ENCODE measurements at regions of chr19 and their contacts with region 1.

Region 1: DNA sequence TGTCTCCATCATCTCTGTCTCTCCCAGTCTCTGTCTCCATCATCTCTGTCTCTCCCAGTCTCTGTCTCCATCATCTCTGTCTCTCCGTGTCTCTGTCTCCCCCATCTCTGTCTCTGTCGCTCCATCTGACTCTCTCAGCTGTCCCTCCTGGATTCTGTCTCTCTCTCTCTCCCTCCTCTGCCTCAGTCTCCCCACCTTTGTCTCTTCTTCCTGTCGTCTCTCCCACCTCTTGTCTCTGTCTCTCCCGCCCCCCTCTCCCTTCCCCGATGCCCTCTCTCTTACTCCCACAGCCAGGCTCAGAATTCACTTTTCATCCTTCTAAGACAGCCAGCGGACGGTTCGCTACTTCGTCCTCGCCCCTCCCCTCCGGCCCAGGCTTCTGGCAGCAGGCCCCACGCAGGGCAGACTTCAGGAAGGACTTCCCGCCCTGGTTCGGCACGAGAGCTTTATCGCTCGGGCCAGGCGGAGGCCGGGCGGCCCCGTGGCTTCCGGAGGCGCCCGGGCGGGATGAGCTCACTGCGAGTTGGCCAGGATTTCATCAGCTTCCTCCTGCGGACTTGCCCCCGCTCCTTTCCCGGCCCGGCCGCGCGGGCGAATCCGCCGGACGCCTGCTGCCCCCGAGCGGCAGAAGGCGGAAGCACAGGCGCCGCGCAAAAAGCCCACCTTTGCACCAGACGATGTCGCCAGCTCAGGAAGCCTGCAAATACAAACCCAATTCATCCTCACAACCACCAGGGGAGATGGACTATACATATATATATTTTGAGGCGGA is 12.4 kb upstream of the CCDC9 start:
- DNase-seq: peak; percentile 72 to 95 (median 86)
- ATAC-seq: peak; percentile 42
- H3K4me3 ChIP-seq: peak overlapping the region; percentile 35
- H3K4me3 Mint-ChIP-seq: peak overlapping the region; percentile 85
- H3K27ac ChIP-seq: peak overlapping the region; percentile 45 to 65
- H3K27ac Mint-ChIP-seq: no peak overlapping the region
- H3K4me1 ChIP-seq: peaks cover 62% of the 10 kb centered on the region
- H3K4me1 Mint-ChIP-seq: peaks cover 15% of the 10 kb centered on the region
- H3K27me3 ChIP-seq: no peaks in the 10 kb centered on the region
- H3K27me3 Mint-ChIP-seq: no peaks in the 10 kb centered on the region
- CTCF ChIP-seq: peak; percentile 98

Region 2: DNA sequence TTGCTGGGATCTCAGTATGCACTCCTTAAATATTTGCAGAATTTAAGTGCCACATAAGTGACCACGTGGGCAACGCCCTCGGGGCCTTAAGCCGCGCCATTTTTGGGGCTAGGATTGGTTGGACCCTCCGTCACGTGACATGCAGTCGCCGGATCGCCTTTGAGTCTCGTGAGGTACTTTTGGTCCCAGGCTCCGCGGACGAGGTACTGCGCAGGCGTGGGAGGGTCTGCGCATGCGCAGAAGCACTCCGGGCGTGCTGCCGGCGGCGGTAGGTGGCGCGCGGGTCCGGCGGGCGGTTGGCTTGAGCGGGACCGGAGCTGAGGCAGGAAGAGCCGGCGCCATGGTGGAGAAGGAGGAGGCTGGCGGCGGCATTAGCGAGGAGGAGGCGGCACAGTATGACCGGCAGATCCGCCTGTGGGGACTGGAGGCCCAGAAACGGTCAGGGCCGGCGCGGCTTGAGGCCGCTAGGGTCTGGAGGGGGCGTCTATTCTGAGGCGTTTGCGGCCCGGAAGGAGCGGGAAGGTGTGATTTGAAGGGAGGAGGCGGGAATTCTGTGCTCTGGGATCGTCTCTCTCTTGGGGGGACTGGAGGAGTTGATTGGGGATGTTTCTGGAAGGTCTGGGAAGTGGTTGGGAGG is 113.3 kb before region 1 on chr19 and contains the start of gene SAE1:
- CTCF ChIA-PET with region 1: interaction called, 23 read pairs
- POLR2A ChIA-PET with region 1: interaction called, 7 read pairs
- intact Hi-C with region 1: loop called in 1 of 2 experiments (anchors 5 kb)
- DNase-seq: peak; percentile 82 to 98 (median 92)
- ATAC-seq: peak; percentile 91
- H3K4me3 ChIP-seq: peak within 1 kb of the TSS; percentile 95
- H3K4me3 Mint-ChIP-seq: peak within 1 kb of the TSS; percentile 96
- H3K27ac ChIP-seq: peak within 1 kb of the TSS; percentile 68 to 74
- H3K27ac Mint-ChIP-seq: peak within 1 kb of the TSS; percentile 83
- H3K4me1 ChIP-seq: peaks cover 44% of the 10 kb centered on the region
- H3K4me1 Mint-ChIP-seq: peaks cover 52% of the 10 kb centered on the region
- H3K27me3 ChIP-seq: no peaks in the 10 kb centered on the region
- H3K27me3 Mint-ChIP-seq: no peaks in the 10 kb centered on the region
- CTCF ChIP-seq: peak; percentile 73
- total RNA-seq, gene SAE1: 29.6 to 30.9 TPM

Region 3: DNA sequence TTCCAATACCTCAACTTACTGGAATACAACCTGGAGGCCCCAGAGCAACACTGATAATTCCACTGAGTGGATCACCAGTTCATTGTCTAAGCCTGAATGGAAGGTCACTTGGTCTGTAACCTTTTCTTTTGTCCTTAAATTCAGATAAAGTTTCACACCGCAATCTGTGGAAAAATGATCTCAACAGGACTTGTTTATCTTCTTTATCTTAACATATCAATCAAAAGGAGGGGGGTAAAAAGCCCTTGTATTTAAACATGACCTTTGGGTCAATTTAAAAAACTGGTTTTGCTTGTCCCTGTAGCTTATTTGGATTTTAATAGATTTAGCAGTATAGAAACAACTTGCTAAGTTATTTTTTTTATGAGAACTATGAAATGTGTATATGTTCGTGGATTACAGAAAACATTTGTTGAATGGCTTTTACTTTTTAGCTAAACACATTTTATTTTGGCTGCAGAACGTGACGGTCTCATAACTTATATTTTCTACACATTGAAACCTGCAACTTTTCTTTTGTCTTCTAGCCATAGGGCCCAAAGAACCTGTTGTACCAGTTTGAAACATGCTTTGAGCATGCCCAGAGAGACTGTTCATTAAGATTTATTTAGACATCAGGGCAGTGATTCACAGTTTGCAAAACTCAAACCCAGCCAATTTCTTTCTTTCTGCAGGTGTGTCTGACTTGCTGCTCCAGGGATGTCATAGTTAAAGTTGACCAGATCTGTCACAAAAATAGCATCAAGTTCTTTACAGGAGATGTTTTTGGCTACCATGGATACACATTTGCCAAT is 91.5 kb before region 1 on chr19:
- CTCF ChIA-PET with region 1: interaction called, 67 read pairs
- POLR2A ChIA-PET with region 1: interaction called, 34 read pairs
- intact Hi-C with region 1: loop called (anchors 1 kb)
- DNase-seq: no peak
- ATAC-seq: no peak
- H3K4me3 ChIP-seq: no peak overlapping the region
- H3K4me3 Mint-ChIP-seq: no peak overlapping the region
- H3K27ac ChIP-seq: no peak overlapping the region
- H3K27ac Mint-ChIP-seq: peak overlapping the region; percentile 27
- H3K4me1 ChIP-seq: peaks cover 49% of the 10 kb centered on the region
- H3K4me1 Mint-ChIP-seq: peaks cover 51% of the 10 kb centered on the region
- H3K27me3 ChIP-seq: no peaks in the 10 kb centered on the region
- H3K27me3 Mint-ChIP-seq: no peaks in the 10 kb centered on the region
- CTCF ChIP-seq: no peak

Region 4: DNA sequence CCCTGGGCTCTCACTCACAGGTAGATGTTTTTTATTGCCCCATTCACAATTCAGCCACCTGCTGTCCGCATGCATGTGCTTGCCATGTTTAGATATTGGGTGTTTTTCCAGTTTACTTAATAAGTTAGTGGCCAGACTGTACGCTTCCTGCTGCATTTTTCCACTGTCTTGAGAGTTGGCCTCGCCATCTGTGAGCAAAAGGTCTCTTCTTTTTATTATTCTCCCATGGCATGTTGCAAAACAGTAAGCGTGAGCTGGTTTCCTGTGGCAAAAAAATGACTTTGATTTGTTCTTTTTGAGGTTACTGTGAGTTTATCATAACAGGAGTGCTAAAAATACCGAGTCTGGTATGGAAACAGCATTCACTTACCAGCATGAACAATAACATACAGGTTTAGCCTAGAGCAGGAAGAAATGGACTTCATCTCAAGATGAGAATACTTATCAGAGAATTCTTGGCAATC is 67.3 kb before region 1 on chr19:
- CTCF ChIA-PET with region 1: interaction called, 22 read pairs
- POLR2A ChIA-PET with region 1: interaction called, 21 read pairs
- intact Hi-C with region 1: no loop called
- DNase-seq: peak in 11 of 14 experiments; percentile 22 to 82 (median 43)
- ATAC-seq: peak; percentile 85
- H3K4me3 ChIP-seq: peak overlapping the region; percentile 6
- H3K4me3 Mint-ChIP-seq: peak overlapping the region; percentile 81
- H3K27ac ChIP-seq: peak overlapping the region; percentile 60 to 68
- H3K27ac Mint-ChIP-seq: peak overlapping the region; percentile 98
- H3K4me1 ChIP-seq: peaks cover 56% of the 10 kb centered on the region
- H3K4me1 Mint-ChIP-seq: peaks cover 69% of the 10 kb centered on the region
- H3K27me3 ChIP-seq: no peaks in the 10 kb centered on the region
- H3K27me3 Mint-ChIP-seq: no peaks in the 10 kb centered on the region
- CTCF ChIP-seq: no peak

Region 5: DNA sequence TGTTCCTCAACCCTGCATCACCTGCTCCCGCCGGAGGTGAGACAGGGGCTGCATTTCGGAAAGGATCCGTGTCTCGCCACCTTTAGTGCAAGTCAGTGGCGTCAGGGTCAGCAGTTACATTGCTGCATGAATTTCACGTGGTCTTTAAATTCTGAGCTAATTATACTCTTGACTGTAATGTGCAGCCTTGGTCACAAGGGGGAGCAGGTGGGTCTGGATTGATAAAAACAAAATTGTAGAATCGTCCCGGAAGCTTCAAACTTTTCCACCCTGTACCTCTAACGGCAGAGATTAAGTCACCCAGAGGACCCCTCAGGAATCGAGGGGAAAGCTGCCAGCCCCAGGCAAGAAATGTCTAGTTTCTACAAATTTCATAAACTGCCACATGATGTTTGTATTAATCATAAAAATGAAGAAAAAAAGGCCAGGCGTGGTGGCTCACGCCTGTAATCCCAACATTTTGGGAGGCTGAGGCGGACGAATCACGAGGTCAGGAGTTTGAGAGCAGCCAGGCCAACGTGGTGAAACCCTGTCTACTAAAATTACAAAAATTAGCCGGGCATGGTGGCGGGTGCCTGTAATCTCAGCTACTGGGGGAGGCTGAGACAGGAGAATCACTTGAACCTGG is 33.2 kb before region 1 on chr19:
- CTCF ChIA-PET with region 1: interaction called, 204 read pairs
- POLR2A ChIA-PET with region 1: interaction called, 67 read pairs
- intact Hi-C with region 1: loop called (anchors 1 kb)
- DNase-seq: peak; percentile 59 to 91 (median 80)
- ATAC-seq: peak; percentile 97
- H3K4me3 ChIP-seq: no peak overlapping the region
- H3K4me3 Mint-ChIP-seq: no peak overlapping the region
- H3K27ac ChIP-seq: no peak overlapping the region
- H3K27ac Mint-ChIP-seq: peak overlapping the region; percentile 4
- H3K4me1 ChIP-seq: peaks cover 10% of the 10 kb centered on the region
- H3K4me1 Mint-ChIP-seq: peaks cover 13% of the 10 kb centered on the region
- H3K27me3 ChIP-seq: no peaks in the 10 kb centered on the region
- H3K27me3 Mint-ChIP-seq: no peaks in the 10 kb centered on the region
- CTCF ChIP-seq: peak; percentile 90

Region 6: GRCh38 chr19:47231215-47231984 is 12.6 kb before region 1 on chr19:
- CTCF ChIA-PET with region 1: interaction called, 63 read pairs
- POLR2A ChIA-PET with region 1: interaction called, 49 read pairs
- intact Hi-C with region 1: loop called (anchors 1 kb)
- DNase-seq: peak; percentile 77 to 96 (median 90)
- ATAC-seq: peak; percentile 56
- H3K4me3 ChIP-seq: peak overlapping the region; percentile 62
- H3K4me3 Mint-ChIP-seq: peak overlapping the region; percentile 85
- H3K27ac ChIP-seq: peak overlapping the region in 1 of 2 donors; percentile 55
- H3K27ac Mint-ChIP-seq: peak overlapping the region; percentile 72
- H3K4me1 ChIP-seq: peaks cover 55% of the 10 kb centered on the region
- H3K4me1 Mint-ChIP-seq: peaks cover 28% of the 10 kb centered on the region
- H3K27me3 ChIP-seq: no peaks in the 10 kb centered on the region
- H3K27me3 Mint-ChIP-seq: no peaks in the 10 kb centered on the region
- CTCF ChIP-seq: no peak

Region 7: GRCh38 chr19:47273313-47273977 is 29.5 kb after region 1 on chr19:
- CTCF ChIA-PET with region 1: interaction called, 3 read pairs
- POLR2A ChIA-PET with region 1: interaction called, 14 read pairs
- intact Hi-C with region 1: no loop called
- DNase-seq: peak; percentile 82 to 95 (median 88)
- ATAC-seq: peak; percentile 63
- H3K4me3 ChIP-seq: peak overlapping the region; percentile 100
- H3K4me3 Mint-ChIP-seq: peak overlapping the region; percentile 100
- H3K27ac ChIP-seq: peak overlapping the region; percentile 92 to 99
- H3K27ac Mint-ChIP-seq: peak overlapping the region; percentile 99
- H3K4me1 ChIP-seq: peaks cover 24% of the 10 kb centered on the region
- H3K4me1 Mint-ChIP-seq: peaks cover 28% of the 10 kb centered on the region
- H3K27me3 ChIP-seq: no peaks in the 10 kb centered on the region
- H3K27me3 Mint-ChIP-seq: no peaks in the 10 kb centered on the region
- CTCF ChIP-seq: no peak

Region 8: GRCh38 chr19:48660854-48661731 is 1417.1 kb after region 1 on chr19:
- CTCF ChIA-PET with region 1: no interaction called
- POLR2A ChIA-PET with region 1: no interaction called
- intact Hi-C with region 1: no loop called
- DNase-seq: peak; percentile 60 to 92 (median 70)
- ATAC-seq: peak; percentile 91
- H3K4me3 ChIP-seq: peak overlapping the region; percentile 21
- H3K4me3 Mint-ChIP-seq: peak overlapping the region; percentile 73
- H3K27ac ChIP-seq: peak overlapping the region; percentile 42 to 46
- H3K27ac Mint-ChIP-seq: peak overlapping the region; percentile 82
- H3K4me1 ChIP-seq: peaks cover 16% of the 10 kb centered on the region
- H3K4me1 Mint-ChIP-seq: peaks cover 9% of the 10 kb centered on the region
- H3K27me3 ChIP-seq: no peaks in the 10 kb centered on the region
- H3K27me3 Mint-ChIP-seq: no peaks in the 10 kb centered on the region
- CTCF ChIP-seq: no peak

Measured in CD4-positive, alpha-beta T cell (primary cell).